Heart left ventricle (tissue), 16 donors: ENCODE measurements at regions of chr13 and their contacts with region 1.

Region 1: GRCh38 chr13:31424117-31424729 is 224.4 kb downstream of the B3GLCT start:
- DNase-seq: peak; percentile 64 to 82 (median 76)
- ATAC-seq: peak; percentile 87 to 97 (median 94)
- H3K4me3 ChIP-seq: no peak overlapping the region
- H3K27ac ChIP-seq: no peak overlapping the region
- H3K4me1 ChIP-seq: peaks cover 0 to 7% (median 0%) of the 10 kb centered on the region in 12 donors
- H3K27me3 ChIP-seq: no peaks in the 10 kb centered on the region
- CTCF ChIP-seq: peak; percentile 74 to 92 (median 88)
- POLR2A ChIP-seq: no peak

Region 2: DNA sequence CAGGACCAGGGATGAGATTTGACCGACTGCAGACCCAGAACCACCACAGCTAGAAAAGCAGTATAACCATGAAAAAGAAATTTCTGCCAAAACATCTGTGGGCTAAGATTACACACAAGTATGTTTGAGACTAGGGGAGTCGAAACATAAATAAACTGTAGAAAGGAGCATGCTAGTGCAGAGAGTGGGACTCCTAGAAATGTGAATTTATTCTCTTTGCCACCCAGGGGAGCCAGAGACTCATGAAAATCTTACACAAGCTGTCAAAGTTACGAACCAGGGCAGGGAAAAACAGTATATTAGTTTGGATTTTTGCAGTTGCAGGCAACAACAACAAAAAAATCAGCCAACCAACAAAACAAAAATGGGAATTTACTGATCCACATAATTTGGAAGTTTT is 250.2 kb before region 1 on chr13:
- intact Hi-C with region 1: loop called in 4 of 10 experiments (anchors 5 to 10 kb)
- DNase-seq: no peak
- ATAC-seq: no peak
- H3K4me3 ChIP-seq: no peak overlapping the region
- H3K27ac ChIP-seq: no peak overlapping the region
- H3K4me1 ChIP-seq: no peaks in the 10 kb centered on the region
- H3K27me3 ChIP-seq: no peaks in the 10 kb centered on the region
- CTCF ChIP-seq: peak in 6 of 12 donors; percentile 11 to 32 (median 24)
- POLR2A ChIP-seq: no peak

Region 3: DNA sequence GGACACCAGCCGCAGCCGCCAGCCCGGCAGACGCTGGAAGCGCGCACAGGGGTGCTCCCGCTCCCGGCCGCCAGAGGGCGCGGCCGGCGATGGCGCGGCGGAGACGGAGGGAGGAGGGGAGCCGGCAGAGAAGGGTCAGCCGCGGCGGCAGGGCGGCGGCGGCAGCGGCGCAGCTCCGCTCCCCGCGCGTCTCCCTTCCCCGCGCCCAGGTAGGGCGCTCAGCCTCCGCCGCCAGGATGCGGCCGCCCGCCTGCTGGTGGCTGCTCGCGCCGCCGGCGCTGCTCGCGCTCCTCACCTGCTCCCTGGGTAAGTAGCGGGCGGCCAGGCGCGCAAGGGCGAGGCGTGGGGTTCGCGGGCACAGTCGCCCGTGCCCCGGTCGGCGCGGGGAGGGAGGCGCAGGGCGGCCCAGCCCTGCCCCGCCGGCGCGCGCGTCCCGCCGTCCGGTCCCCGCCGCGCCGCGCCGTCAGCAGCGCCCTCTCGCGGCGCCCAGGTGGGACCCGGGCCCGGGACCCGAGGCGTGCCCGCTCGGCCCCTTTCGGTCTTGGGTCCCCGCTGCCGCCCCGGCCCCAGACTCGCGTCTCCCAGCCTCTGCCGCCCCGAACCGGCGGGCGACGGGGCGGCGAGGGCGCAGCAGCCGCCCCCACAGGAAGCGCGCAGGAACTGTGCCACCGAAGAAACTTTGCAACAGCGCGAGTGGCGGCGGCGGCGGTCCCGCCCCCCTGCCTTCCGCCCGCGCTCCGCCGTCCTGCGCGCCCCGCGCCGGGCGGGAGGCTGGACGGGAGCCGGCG is 224.2 kb before region 1 on chr13 and contains the start of gene B3GLCT:
- intact Hi-C with region 1: loop called in 3 of 10 experiments (anchors 10 kb)
- DNase-seq: peak; percentile 79 to 92 (median 81)
- ATAC-seq: peak; percentile 64 to 91 (median 85)
- H3K4me3 ChIP-seq: peak within 1 kb of the TSS; percentile 52 to 99 (median 82)
- H3K27ac ChIP-seq: peak within 1 kb of the TSS; percentile 93 to 100 (median 98)
- H3K4me1 ChIP-seq: peaks cover 0 to 46% (median 19%) of the 10 kb centered on the region in 12 donors
- H3K27me3 ChIP-seq: no peaks in the 10 kb centered on the region
- CTCF ChIP-seq: peak; percentile 60 to 95 (median 84)
- POLR2A ChIP-seq: no peak
- total RNA-seq, gene B3GLCT: 9.5 to 27.2 (median 20.9) TPM

Region 4: DNA sequence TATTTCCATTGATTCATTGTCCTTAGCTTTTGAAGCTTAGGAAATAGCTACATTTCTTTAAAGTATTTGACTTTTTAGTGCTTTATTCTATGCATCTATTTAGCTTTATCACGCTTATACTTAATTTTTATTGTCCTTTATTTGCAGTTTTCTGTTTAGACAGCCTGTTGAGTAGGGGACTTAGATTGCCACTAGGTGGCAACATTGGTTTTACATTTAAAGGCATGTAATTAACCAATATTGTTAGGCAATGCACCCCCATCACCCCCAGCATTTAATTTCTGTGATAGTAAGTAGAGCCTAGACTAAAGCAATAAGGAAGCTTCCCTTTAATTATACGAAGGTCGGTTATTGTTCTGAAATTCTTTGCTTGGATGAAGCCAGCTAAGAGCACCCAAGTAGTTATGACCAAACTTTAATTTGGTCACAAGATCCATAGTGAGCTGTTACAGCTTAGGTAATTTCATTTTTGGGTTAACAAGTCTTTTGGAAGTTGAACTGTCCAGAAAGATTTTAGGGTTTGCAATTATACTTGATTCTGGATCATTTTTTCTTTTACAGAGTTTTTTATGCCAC is 187.9 kb before region 1 on chr13:
- intact Hi-C with region 1: loop called (anchors 1 to 5 kb)
- DNase-seq: no peak
- ATAC-seq: peak in 1 of 4 donors; percentile 39
- H3K4me3 ChIP-seq: no peak overlapping the region
- H3K27ac ChIP-seq: no peak overlapping the region
- H3K4me1 ChIP-seq: no peaks in the 10 kb centered on the region
- H3K27me3 ChIP-seq: no peaks in the 10 kb centered on the region
- CTCF ChIP-seq: peak; percentile 50 to 79 (median 68)
- POLR2A ChIP-seq: no peak